ENCODE measurements at regions of chr14 and their contacts with region 1.

Region 1: GRCh38 chr14:99628832-99629618 is 15.9 kb upstream of the HHIPL1 start:
- DNase-seq: peak; percentile 67
- H3K4me3 Mint-ChIP-seq: no peak overlapping the region
- H3K27ac Mint-ChIP-seq: no peak overlapping the region
- H3K4me1 Mint-ChIP-seq: no peaks in the 10 kb centered on the region
- H3K27me3 Mint-ChIP-seq: no peaks in the 10 kb centered on the region
- CTCF ChIP-seq: peak; percentile 96

Region 2: DNA sequence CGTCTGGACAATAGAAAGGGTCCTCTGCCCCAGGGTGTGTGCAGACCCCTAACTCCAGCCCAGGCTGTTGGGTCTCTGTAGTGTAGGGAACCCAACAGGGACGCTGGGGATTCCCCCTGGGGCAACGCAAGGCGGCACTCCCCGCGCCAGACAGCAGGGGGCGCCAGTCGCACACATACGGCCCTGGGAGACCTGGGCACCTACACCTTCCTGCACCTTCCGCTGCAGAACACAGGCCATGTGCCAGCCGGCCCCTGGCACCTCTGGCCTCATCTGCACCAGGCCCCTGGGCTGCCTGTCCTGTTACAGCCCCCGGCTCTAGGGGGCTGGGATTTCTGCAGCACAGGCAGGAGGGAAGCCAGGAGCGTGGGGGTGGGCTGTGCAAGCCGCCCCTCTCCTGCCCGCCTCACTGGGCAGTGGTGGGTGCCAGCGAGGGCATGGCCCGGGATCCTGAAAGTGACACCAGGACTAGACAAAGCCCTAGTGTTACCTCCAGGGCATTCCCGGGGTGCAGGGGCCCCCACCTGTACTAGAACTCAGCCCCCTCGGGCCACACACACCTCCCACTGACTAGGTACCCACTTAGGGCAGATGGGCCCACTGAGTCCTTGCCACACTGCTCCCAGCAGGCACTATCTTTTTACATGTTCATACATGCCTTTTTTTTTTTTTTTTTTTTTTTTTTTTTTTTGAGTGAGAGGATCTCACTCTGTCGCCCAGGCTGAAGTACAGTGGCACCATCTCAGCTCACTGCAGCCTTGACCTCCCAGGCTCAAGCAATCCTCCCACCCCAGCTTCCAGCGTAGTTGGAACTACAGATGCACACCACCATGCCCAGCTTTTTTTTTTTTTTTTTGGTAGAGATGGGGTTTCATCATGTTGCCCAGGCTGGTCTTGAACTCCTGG is 110.3 kb before region 1 on chr14:
- CTCF ChIA-PET with region 1: interaction called, 22 read pairs
- POLR2A ChIA-PET with region 1: no interaction called
- intact Hi-C with region 1: loop called (anchors 1 kb)
- DNase-seq: peak; percentile 75
- H3K4me3 Mint-ChIP-seq: no peak overlapping the region
- H3K27ac Mint-ChIP-seq: no peak overlapping the region
- H3K4me1 Mint-ChIP-seq: no peaks in the 10 kb centered on the region
- H3K27me3 Mint-ChIP-seq: no peaks in the 10 kb centered on the region
- CTCF ChIP-seq: peak; percentile 95

Region 3: DNA sequence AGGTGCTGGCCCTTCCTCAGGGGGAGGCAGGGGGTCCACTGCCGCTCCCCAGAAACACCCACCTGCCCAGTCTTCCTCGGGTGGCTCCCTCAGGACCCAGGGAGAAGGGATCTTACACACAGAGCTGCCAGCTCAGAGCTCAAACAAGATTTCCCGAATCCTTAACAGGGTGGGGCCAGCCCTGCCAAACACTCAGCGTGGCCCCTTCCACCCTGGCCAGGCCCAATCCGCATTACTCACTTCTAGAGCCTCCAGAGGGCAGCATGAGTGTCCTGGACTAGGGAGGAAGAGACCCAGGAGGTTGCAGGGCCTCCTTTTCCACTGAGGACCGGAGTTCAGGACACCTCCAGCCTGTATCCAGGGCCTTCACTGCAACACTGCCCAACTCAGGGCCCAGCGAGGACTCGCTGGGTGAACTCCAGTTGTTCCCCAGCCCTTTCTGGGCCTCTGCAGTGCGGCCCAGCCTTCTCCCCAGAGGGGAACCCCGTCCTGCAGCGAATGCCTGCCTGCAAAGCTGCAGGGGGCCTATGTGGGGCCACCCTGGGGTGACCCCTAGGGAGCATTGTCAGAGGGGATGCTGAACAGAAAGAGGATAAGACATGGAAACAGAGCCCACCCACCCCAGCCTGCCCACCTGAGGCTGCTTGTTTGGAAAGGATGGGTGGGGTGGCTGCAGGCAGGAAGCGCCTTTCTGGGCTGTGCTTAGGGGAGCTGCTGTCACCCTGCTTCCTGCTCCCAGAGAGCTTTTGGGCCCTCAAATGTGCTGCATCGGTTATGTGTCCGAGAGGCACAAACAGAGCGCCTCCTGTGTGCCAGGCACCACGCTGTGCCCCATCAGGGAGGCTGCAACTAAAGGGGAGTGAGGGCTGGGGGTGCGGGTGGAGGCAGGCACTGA is 104.0 kb before region 1 on chr14:
- CTCF ChIA-PET with region 1: interaction called, 22 read pairs
- POLR2A ChIA-PET with region 1: no interaction called
- intact Hi-C with region 1: no loop called
- DNase-seq: peak; percentile 45
- H3K4me3 Mint-ChIP-seq: no peak overlapping the region
- H3K27ac Mint-ChIP-seq: no peak overlapping the region
- H3K4me1 Mint-ChIP-seq: peaks cover 16% of the 10 kb centered on the region
- H3K27me3 Mint-ChIP-seq: no peaks in the 10 kb centered on the region
- CTCF ChIP-seq: peak; percentile 22

Region 4: GRCh38 chr14:99541677-99542470 is 87.2 kb before region 1 on chr14:
- CTCF ChIA-PET with region 1: no interaction called
- POLR2A ChIA-PET with region 1: no interaction called
- intact Hi-C with region 1: no loop called
- DNase-seq: no peak
- H3K4me3 Mint-ChIP-seq: no peak overlapping the region
- H3K27ac Mint-ChIP-seq: no peak overlapping the region
- H3K4me1 Mint-ChIP-seq: peaks cover 13% of the 10 kb centered on the region
- H3K27me3 Mint-ChIP-seq: no peaks in the 10 kb centered on the region
- CTCF ChIP-seq: no peak

Region 5: DNA sequence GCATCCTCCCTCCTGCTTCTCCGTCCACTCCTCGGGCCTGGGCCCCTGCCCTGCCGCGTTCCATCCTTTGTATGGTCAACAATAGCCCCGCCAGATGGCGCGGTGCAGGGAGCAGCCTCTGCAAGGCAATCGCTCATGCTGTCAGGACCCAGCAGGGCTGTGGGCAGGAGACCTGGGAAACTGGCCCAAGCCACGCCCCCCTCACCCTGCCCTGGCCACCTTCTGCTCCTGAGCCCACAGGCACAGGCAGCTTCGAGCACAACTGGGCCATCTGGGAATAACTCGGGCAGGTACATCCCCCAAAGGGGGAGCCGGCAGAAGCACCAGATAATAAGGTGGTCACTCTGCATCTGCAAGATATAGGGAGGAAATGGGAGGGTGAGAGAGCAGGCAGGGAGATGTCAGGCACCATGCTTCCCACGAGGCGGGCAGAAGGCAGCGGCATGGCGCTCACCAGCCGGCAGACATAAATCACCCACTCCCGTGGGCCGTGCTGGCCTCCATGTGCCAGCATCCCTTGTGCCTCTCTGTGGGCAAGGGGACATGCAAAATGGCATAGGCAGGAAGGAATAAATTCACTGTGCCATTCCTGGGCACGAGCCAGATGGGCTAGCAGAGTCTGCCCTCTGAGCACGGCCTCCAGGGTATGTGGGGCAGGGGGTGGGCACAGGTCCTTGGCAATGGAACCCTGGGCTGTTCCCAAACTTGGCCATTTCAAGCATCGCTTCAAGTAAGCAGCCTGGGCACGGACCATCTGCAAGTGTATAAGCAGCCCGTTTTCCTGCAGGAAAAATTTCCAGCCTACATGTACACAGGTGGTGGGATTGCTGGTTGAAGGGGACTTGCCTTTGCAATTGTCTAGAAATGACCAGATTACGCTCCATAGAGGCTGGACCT is 65.5 kb before region 1 on chr14:
- CTCF ChIA-PET with region 1: interaction called, 7 read pairs
- POLR2A ChIA-PET with region 1: no interaction called
- intact Hi-C with region 1: loop called (anchors 1 kb)
- DNase-seq: peak; percentile 85
- H3K4me3 Mint-ChIP-seq: no peak overlapping the region
- H3K27ac Mint-ChIP-seq: no peak overlapping the region
- H3K4me1 Mint-ChIP-seq: peaks cover 33% of the 10 kb centered on the region
- H3K27me3 Mint-ChIP-seq: no peaks in the 10 kb centered on the region
- CTCF ChIP-seq: peak; percentile 30

Region 6: GRCh38 chr14:100140452-100141078 is 511.5 kb after region 1 on chr14:
- CTCF ChIA-PET with region 1: no interaction called
- POLR2A ChIA-PET with region 1: no interaction called
- intact Hi-C with region 1: no loop called
- DNase-seq: no peak
- H3K4me3 Mint-ChIP-seq: no peak overlapping the region
- H3K27ac Mint-ChIP-seq: no peak overlapping the region
- H3K4me1 Mint-ChIP-seq: no peaks in the 10 kb centered on the region
- H3K27me3 Mint-ChIP-seq: no peaks in the 10 kb centered on the region
- CTCF ChIP-seq: no peak